ENCODE measurements at regions of chr4 and their contacts with region 1.

Region 1: DNA sequence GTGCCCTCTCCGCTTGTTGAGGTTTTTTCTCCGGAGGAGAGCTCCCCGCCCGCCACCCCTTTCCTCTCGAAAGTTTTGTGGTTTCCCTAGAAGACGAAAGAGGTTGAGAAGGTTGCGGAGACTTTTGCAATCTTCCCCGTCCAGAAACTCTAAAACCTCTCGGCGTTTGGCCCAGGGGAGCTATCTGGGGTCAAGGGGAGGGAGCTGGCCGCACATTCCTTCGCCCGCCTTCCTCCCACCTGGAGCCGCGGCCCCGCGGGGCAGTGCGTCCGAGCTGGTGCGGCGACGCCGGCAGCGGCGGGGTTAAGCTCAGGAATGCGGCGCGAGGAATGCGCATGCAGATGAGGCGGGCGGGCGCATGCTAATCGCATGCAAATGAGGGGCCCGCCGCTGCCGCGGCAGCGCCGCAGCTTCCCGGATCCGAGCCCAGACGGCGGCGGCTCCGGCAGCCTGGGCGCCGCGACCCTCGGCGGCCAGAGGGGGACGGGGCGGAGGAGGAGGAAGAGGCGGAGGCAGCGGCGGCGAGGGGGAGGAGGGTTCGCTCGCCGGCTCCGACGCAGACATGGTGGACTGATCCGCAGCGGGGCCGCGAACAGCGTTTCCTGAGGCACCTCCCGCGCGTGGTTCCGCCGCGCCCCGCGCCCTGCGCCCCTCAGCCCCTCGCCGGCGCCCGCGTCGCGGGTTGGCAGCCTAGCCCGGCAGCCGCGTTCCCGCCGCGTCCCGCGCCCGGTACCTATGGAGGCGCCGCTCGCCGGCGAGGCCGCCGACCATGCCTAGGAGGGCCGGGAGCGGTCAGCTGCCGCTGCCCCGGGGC is at the start of gene WWC2:
- DNase-seq: peak; percentile 96
- H3K4me3 ChIP-seq: peak within 1 kb of the TSS; percentile 89
- H3K27ac ChIP-seq: peak within 1 kb of the TSS; percentile 95
- H3K4me1 ChIP-seq: peaks cover 71% of the 10 kb centered on the region
- H3K27me3 ChIP-seq: no peaks in the 10 kb centered on the region
- CTCF ChIP-seq: no peak
- total RNA-seq, gene WWC2: 82.8 and 86.5 TPM in 2 replicates

Region 2: DNA sequence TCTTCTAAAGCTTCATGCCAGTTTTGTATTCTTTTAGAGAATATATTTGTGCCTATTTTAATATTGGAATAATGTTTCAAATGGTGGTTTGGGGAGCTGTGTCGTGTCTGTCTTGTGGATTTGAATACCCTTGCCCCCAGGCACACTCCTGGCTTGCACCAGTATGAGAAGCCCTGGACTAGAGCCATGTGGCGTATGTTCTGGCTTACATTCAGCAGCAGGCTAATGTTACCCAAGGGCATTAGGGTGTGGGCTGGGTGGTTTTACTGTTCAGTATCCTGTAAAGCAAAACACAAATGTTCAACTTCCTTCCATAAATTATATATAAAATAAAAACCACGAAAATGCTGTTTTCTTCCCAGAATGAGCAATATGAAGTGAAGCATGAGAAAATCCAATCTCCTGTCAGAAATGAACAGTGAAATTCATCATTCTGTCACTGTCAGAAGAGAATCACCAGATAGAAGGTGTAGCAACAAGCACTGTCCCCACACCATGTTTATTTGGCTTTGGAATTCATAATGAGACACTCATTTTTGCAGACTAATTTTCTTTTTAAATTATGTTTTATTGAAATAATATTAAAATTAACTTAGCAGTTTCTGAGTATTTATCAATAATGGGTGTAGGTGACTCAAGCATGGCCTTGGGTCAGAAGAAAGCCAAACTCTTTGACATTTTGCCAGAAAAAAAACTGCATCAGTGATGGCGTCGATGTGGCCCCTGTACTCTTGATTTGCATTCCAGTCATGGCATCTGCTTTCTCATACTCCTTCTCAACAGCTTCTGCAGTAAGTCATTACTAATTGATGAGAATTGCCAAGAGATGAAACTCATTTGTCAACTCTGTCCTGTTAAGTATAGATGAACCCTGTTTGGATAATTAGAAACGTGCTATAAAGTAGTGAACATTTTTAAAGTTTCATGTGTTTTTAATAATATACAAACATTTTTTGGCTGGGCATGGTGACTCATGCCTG is 43.9 kb after region 1 on chr4:
- CTCF ChIA-PET with region 1: no interaction called
- POLR2A ChIA-PET with region 1: no interaction called
- intact Hi-C with region 1: loop called (anchors 5 kb)
- DNase-seq: peak; percentile 90
- H3K4me3 ChIP-seq: no peak overlapping the region
- H3K27ac ChIP-seq: peak overlapping the region; percentile 45
- H3K4me1 ChIP-seq: peaks cover 75% of the 10 kb centered on the region
- H3K27me3 ChIP-seq: no peaks in the 10 kb centered on the region
- CTCF ChIP-seq: no peak

Region 3: DNA sequence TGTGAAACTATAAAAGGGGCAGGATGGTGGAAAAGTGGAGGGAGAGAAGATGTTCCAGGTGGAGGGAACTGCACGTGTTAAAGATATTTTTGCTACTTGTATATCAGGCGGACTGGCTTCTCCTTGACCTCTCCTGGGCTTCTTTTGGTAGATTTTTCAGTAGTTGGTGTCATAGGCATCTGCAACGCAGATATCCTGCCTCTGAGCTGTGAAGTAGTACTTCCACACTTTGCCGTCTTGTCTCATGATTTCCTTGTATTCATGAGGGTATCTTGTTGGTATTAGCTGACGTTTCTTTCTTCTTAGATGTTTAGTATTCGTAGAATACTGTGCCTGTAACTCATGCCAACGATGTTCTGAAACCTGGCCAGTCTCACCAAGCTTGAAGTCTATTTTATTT is 81.2 kb after region 1 on chr4:
- CTCF ChIA-PET with region 1: no interaction called
- POLR2A ChIA-PET with region 1: no interaction called
- intact Hi-C with region 1: loop called (anchors 2 kb)
- DNase-seq: peak; percentile 37
- H3K4me3 ChIP-seq: no peak overlapping the region
- H3K27ac ChIP-seq: peak overlapping the region; percentile 79
- H3K4me1 ChIP-seq: peaks cover 57% of the 10 kb centered on the region
- H3K27me3 ChIP-seq: no peaks in the 10 kb centered on the region
- CTCF ChIP-seq: no peak

Region 4: DNA sequence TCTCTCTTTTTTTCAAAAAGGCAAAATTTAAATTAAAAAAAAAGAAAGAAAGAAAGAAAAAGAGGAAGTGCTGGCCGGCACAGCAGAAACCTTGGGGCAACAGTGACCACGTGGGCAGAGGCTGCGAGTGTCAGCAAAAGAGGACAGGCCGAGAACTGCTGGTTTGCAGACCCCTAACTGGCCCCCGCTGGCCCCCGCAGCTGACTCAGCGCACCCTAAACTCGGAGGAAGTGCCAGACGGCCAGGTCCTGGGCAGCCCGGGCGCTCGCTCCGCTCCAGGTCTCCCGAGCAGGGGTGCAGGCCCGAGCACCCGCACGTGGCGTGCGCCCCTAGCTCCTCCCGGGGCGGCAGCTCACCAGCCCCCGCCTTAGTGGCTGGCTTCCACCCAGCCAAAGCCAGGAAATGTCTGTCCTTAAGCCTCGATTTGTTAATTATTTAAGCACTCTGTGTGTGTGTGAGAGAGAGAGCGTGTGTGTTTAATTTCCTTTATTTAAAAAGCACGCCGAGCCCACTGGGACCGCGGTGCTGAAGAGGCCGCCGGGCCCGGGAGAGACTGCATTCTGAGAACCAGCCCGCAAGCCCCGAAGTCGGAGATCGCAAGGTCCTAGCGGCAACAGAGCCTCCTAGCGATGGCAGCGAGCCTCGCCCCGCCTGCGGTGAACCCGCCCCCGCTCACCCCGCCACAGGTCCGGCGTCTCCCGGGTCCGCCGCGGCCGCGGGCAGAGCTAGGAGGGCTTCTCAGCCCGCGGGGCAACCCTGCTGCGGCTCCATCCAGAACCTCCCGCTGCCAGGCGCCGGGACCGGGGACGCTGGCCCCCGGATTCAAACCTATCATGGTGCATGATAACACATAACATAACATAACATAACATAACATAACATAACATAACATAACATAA is 299.5 kb after region 1 on chr4:
- CTCF ChIA-PET with region 1: no interaction called
- POLR2A ChIA-PET with region 1: no interaction called
- intact Hi-C with region 1: loop called (anchors 1 kb)
- DNase-seq: peak; percentile 86
- H3K4me3 ChIP-seq: peak overlapping the region; percentile 20
- H3K27ac ChIP-seq: peak overlapping the region; percentile 88
- H3K4me1 ChIP-seq: peaks cover 43% of the 10 kb centered on the region
- H3K27me3 ChIP-seq: no peaks in the 10 kb centered on the region
- CTCF ChIP-seq: peak; percentile 65